ENCODE measurements at regions of chr3 and their contacts with region 1.

Region 1: GRCh38 chr3:170055209-170055608 is 17.4 kb downstream of the GPR160 start:
- DNase-seq: peak; percentile 58
- H3K4me3 Mint-ChIP-seq: no peak overlapping the region
- H3K27ac Mint-ChIP-seq: no peak overlapping the region
- H3K4me1 Mint-ChIP-seq: peaks cover 50% of the 10 kb centered on the region
- H3K27me3 Mint-ChIP-seq: no peaks in the 10 kb centered on the region

Region 2: DNA sequence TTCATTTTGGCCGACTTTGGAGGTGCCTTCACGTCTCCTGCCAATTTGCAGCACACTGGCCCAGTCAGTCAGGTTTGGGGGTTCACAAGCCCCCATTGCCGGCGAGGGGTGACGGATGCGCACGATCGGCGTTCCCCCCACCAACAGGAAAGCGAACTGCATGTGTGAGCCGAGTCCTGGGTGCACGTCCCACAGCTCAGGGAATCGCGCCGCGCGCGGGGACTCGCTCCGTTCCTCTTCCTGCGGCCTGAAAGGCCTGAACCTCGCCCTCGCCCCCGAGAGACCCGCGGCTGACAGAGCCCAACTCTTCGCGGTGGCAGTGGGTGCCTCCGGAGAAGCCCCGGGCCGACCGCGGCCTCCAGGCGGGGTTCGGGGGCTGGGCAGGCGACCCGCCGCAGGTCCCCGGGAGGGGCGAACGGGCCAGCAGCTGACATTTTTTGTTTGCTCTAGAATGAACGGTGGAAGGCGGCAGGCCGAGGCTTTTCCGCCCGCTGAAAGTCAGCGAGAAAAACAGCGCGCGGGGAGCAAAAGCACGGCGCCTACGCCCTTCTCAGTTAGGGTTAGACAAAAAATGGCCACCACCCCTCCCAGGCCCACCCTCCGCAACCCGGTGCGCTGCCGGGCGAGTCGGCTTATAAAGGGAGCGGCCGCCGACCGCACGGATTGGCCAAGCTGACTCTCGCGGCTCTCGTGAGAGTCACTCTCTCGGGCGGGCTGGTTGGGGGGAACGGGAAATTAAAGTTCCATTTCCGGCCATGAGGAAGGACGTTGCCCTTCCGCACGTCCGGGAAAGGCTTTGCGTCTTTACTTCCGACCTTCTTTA is 290.5 kb before region 1 on chr3 and contains the start of gene TERC:
- CTCF ChIA-PET with region 1: interaction called, 3 read pairs
- intact Hi-C with region 1: loop called (anchors 1 kb)
- DNase-seq: peak; percentile 94
- H3K4me3 Mint-ChIP-seq: peak within 1 kb of the TSS; percentile 97
- H3K27ac Mint-ChIP-seq: peak within 1 kb of the TSS; percentile 99
- H3K4me1 Mint-ChIP-seq: peaks cover 19% of the 10 kb centered on the region
- H3K27me3 Mint-ChIP-seq: no peaks in the 10 kb centered on the region
- total RNA-seq, gene TERC: 16.0 to 20.4 TPM

Region 3: DNA sequence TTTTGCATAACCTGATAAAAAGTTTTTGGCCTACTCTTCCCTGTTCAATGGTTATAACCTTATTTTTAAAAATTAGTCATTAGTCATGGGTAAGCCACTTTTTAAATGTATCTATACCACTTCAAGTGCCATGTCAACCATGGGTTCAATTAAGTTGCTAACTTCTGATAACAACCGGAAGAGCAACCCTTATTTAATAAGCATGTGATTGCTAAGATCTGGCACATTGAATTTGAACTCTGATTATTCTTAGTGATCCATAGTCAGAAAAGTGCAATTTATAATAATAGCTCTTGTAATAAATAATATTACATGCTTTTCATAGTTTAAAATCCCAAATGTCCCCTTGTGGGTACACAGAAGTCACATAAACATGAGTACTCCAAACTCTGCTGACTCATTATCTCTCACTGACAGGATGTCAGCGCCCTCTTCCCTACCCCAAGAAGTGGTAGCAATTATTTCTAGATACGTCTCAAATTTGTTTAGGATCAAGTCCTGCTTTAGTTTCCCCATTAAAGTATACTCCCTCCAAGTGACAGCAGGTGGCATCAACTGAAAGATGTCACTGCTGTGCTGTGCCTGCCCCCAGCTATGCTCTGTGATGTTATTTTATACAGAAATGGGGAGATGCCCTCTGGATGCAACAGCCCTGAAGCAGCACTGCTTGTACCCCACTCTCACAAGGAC is 125.2 kb before region 1 on chr3:
- CTCF ChIA-PET with region 1: no interaction called
- intact Hi-C with region 1: loop called (anchors 1 kb)
- DNase-seq: peak; percentile 50
- H3K4me3 Mint-ChIP-seq: no peak overlapping the region
- H3K27ac Mint-ChIP-seq: no peak overlapping the region
- H3K4me1 Mint-ChIP-seq: peaks cover 4% of the 10 kb centered on the region
- H3K27me3 Mint-ChIP-seq: no peaks in the 10 kb centered on the region

Region 4: GRCh38 chr3:169998568-169999131 is 56.6 kb before region 1 on chr3:
- CTCF ChIA-PET with region 1: interaction called, 5 read pairs
- intact Hi-C with region 1: loop called (anchors 1 kb)
- DNase-seq: no peak
- H3K4me3 Mint-ChIP-seq: no peak overlapping the region
- H3K27ac Mint-ChIP-seq: peak overlapping the region; percentile 83
- H3K4me1 Mint-ChIP-seq: peaks cover 40% of the 10 kb centered on the region
- H3K27me3 Mint-ChIP-seq: no peaks in the 10 kb centered on the region

Region 5: DNA sequence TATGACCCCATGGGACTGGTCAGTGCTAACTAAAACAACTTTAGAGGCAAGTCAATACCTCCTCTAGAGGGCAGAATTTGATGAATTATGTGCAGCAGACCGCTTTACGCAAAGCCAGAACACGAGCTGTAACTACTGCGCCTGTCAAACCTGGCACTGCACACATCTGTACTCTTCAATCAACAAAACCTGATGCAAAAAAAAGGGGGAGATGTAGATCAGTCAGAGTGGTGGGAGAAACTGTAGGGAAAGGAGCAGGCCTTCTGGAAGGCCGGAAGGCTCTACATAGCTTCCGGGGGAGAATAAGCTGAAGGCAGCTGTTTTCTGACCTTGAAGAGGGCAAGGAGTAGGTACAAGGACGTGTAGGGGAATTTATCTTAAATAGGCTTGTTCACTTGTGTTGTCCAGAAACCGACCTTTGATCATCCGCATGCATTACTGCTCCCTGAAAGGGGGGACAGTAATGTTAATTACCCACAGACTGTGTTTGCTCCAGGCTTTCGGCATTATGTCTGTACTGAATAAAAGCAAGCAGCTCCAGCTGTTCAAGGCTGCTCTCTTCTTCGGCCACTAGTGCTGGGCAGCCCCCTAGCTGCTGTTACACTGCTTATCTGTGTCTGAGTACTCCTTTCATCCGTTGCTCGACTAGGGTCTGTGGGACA is 23.5 kb after region 1 on chr3:
- CTCF ChIA-PET with region 1: interaction called, 8 read pairs
- intact Hi-C with region 1: loop called (anchors 2 kb)
- DNase-seq: no peak
- H3K4me3 Mint-ChIP-seq: no peak overlapping the region
- H3K27ac Mint-ChIP-seq: no peak overlapping the region
- H3K4me1 Mint-ChIP-seq: peaks cover 8% of the 10 kb centered on the region
- H3K27me3 Mint-ChIP-seq: no peaks in the 10 kb centered on the region

Region 6: GRCh38 chr3:170180908-170181879 is 126.0 kb after region 1 on chr3 and contains the start of gene PHC3:
- CTCF ChIA-PET with region 1: interaction called, 3 read pairs
- intact Hi-C with region 1: loop called (anchors 1 kb)
- DNase-seq: peak; percentile 93
- H3K4me3 Mint-ChIP-seq: peak within 1 kb of the TSS; percentile 97
- H3K27ac Mint-ChIP-seq: peak within 1 kb of the TSS; percentile 100
- H3K4me1 Mint-ChIP-seq: peaks cover 23% of the 10 kb centered on the region
- H3K27me3 Mint-ChIP-seq: no peaks in the 10 kb centered on the region
- total RNA-seq, gene PHC3: 48.7 to 50.4 TPM

Region 7: DNA sequence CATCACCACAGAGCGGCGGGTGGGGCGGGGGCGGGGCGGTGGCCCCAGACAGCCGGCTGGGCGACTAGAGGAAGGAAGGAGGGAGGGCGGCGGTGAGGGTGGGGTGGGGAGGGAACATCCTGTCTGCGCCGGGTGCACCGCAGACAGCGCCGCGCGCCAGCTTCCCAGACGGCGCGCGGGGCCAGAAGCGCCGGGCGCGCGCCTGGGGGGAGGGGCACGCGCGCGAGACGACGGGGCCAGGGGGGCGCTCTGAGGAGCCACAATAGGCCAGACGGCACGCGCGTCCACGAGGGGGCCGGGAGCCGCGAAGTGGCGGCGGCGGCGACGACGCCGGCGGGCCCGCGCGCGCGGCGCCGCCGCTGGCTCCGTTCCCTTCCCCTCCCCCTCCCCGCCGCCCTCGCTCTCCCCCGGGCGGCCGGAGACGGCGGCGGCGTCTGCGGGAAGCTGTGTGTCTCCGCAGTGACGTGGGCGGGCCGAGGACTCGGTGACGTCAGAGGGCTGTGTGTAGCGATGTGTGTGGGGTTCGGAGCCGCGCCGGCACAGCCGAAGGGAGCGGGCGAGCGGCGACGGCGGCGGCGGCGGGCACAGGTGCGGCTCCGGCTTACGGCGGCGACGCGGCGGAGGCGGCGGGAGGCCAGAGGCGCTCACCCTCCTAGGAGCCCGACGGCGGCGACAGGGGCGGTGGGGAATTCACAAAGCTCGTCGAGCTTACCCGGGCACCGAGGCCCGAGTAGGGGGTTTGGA is 302.1 kb after region 1 on chr3 and contains the start of gene SKIL:
- CTCF ChIA-PET with region 1: no interaction called
- intact Hi-C with region 1: loop called (anchors 5 kb)
- DNase-seq: peak; percentile 97
- H3K4me3 Mint-ChIP-seq: peak within 1 kb of the TSS; percentile 96
- H3K27ac Mint-ChIP-seq: peak within 1 kb of the TSS; percentile 95
- H3K4me1 Mint-ChIP-seq: peaks cover 32% of the 10 kb centered on the region
- H3K27me3 Mint-ChIP-seq: no peaks in the 10 kb centered on the region
- total RNA-seq, gene SKIL: 16.3 to 17.5 TPM

Region 8: GRCh38 chr3:170689893-170690660 is 634.9 kb after region 1 on chr3:
- CTCF ChIA-PET with region 1: no interaction called
- intact Hi-C with region 1: no loop called
- DNase-seq: peak; percentile 59
- H3K4me3 Mint-ChIP-seq: no peak overlapping the region
- H3K27ac Mint-ChIP-seq: no peak overlapping the region
- H3K4me1 Mint-ChIP-seq: peaks cover 3% of the 10 kb centered on the region
- H3K27me3 Mint-ChIP-seq: no peaks in the 10 kb centered on the region

Measured in activated naive CD4-positive, alpha-beta T cell treated with anti-CD3 and anti-CD28 coated beads for 36 hours (primary cell).